Endothelial cell of umbilical vein (primary cell): ENCODE measurements at regions of chr12 and their contacts with region 1.

Region 1: GRCh38 chr12:6323340-6323994 is 13.0 kb downstream of the PLEKHG6 start:
- DNase-seq: peak; percentile 98
- H3K4me3 ChIP-seq: no peak overlapping the region
- H3K27ac ChIP-seq: peak overlapping the region; percentile 80
- H3K4me1 ChIP-seq: peaks cover 36% of the 10 kb centered on the region
- H3K27me3 ChIP-seq: no peaks in the 10 kb centered on the region
- CTCF ChIP-seq: peak; percentile 62 to 67
- POLR2A ChIP-seq: no peak

Region 2: DNA sequence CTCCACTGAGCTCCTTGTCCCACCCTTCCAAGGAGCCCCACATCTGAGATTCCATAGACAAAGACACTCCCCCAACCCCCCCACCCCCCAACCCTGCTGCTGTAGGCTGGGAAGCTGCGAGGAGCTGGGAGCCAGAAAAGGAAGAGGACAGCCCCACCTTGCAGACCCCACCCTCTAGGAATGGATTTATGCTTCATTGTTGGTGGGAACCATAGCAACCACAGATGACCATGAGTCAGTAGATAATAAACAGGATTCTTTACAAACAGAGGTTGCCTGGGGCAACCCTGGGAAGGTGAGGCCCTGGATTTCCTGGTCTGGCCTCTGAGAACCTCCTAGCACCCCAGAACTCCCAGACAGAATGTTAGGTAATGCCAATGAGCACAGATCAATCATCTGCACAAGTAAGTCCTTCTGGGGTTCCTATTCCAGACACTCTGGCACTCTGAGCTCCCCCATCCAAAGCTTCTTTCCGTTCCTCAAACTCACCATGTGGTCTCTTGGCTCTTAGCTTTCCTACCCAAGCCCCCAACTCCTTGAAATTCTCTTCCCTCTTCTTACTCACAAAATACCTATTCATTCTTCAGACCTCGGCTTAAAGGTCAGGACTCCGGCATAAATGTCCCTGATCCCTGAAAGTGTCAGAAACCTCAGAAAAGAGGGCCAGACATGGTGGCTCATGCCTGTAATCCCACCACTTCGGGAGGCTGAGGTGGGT is 28.2 kb before region 1 on chr12:
- CTCF ChIA-PET with region 1: interaction called, 9 read pairs
- POLR2A ChIA-PET with region 1: no interaction called
- dilution Hi-C with region 1: no loop called
- intact Hi-C with region 1: loop called (anchors 1 kb)
- DNase-seq: peak; percentile 90
- H3K4me3 ChIP-seq: no peak overlapping the region
- H3K27ac ChIP-seq: peak overlapping the region; percentile 86
- H3K4me1 ChIP-seq: peaks cover 13% of the 10 kb centered on the region
- H3K27me3 ChIP-seq: no peaks in the 10 kb centered on the region
- CTCF ChIP-seq: no peak
- POLR2A ChIP-seq: no peak

Region 3: GRCh38 chr12:6341417-6342139 is 18.1 kb after region 1 on chr12 and contains the start of gene TNFRSF1A:
- CTCF ChIA-PET with region 1: interaction called, 41 read pairs
- POLR2A ChIA-PET with region 1: interaction called, 7 read pairs
- dilution Hi-C with region 1: no loop called
- intact Hi-C with region 1: loop called (anchors 1 kb)
- DNase-seq: peak; percentile 70
- H3K4me3 ChIP-seq: peak within 1 kb of the TSS; percentile 89 to 98 (median 89)
- H3K27ac ChIP-seq: peak within 1 kb of the TSS; percentile 69
- H3K4me1 ChIP-seq: peaks cover 56% of the 10 kb centered on the region
- H3K27me3 ChIP-seq: no peaks in the 10 kb centered on the region
- CTCF ChIP-seq: no peak
- POLR2A ChIP-seq: peak; percentile 47
- total RNA-seq, gene TNFRSF1A: 84.0 and 98.2 TPM in 2 replicates

Region 4: DNA sequence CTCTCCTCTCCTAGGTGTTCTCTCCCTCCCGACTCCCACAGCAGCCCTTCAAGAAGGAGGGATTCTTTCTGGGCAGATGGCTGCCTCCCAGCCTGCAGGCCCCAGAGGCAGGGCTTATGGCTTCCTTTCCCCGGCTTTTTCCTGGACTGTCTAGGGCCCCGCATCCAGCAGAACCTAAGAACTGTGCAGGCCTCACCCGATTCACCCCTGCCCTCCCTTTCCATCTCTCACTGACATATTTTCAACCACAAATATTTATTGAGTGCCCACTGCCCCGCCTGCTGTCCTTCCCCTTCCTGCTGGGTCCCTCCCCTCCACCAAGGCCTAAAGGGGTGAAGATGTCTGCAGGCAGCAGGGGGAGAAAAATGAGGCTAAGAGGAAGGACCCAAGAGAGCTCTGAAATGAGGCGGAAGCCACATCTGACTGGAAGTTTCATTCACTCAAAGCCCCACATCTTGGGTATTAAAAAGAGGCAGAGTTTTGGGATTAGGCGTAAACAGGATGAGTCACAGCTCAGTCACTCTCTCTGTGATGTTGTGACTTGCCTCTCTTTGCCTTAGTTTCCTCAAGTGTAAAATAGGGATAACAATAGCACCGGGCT is 49.0 kb after region 1 on chr12:
- CTCF ChIA-PET with region 1: interaction called, 12 read pairs
- POLR2A ChIA-PET with region 1: no interaction called
- dilution Hi-C with region 1: no loop called
- intact Hi-C with region 1: loop called (anchors 2 kb)
- DNase-seq: peak; percentile 58
- H3K4me3 ChIP-seq: no peak overlapping the region
- H3K27ac ChIP-seq: peak overlapping the region; percentile 54
- H3K4me1 ChIP-seq: peaks cover 36% of the 10 kb centered on the region
- H3K27me3 ChIP-seq: no peaks in the 10 kb centered on the region
- CTCF ChIP-seq: no peak
- POLR2A ChIP-seq: no peak

Region 5: GRCh38 chr12:6423267-6424007 is 100.0 kb after region 1 on chr12:
- CTCF ChIA-PET with region 1: interaction called, 8 read pairs
- POLR2A ChIA-PET with region 1: no interaction called
- dilution Hi-C with region 1: no loop called
- intact Hi-C with region 1: loop called (anchors 1 kb)
- DNase-seq: peak; percentile 92
- H3K4me3 ChIP-seq: no peak overlapping the region
- H3K27ac ChIP-seq: no peak overlapping the region
- H3K4me1 ChIP-seq: no peaks in the 10 kb centered on the region
- H3K27me3 ChIP-seq: no peaks in the 10 kb centered on the region
- CTCF ChIP-seq: peak; percentile 72 to 84
- POLR2A ChIP-seq: no peak

Region 6: DNA sequence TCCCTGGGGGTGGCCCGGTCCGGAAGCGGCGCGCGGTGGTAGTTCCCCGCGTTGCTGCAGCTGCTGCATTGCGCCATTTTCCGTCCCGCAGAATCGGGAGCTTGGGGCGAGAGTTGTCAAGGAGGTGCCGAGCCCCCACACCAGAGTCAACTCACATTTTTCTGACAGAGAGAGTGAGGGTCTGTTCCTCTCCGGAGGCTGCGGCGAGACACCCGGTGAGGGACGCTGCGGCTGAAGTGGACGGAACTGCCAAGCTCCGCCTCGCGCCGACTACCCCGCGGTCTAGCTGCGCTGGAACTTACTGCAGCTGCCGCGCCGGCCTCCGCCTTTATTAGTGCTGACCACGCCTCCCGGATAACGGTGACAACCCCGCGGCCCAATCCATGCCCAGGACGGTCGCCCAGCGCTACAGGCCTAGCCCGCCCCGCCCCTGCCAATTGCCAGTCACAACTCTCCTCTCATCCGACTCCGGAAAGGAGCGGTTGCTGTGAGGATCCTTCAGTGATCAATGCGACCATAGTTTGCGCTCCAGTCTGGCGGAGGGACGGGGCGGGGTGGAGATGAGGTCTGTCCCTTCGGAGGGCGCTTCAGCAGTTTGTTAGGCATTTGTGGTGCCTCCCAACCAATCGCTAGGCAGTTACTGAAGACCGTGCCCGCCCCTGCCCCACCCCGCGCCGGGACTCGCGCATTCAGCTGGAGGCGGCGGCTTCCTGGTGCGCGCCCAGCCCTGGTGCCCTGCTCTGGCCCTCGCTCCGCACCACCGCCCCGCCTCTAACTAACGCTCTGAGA is 147.1 kb after region 1 on chr12 and contains the start of gene VAMP1:
- CTCF ChIA-PET with region 1: interaction called, 47 read pairs
- POLR2A ChIA-PET with region 1: interaction called, 11 read pairs
- dilution Hi-C with region 1: no loop called
- intact Hi-C with region 1: loop called (anchors 2 kb)
- DNase-seq: peak; percentile 97
- H3K4me3 ChIP-seq: peak within 1 kb of the TSS; percentile 67 to 84 (median 71)
- H3K27ac ChIP-seq: peak within 1 kb of the TSS; percentile 49
- H3K4me1 ChIP-seq: peaks cover 16% of the 10 kb centered on the region
- H3K27me3 ChIP-seq: peaks cover 0 to 5% of the 10 kb centered on the region in 2 experiments
- CTCF ChIP-seq: no peak
- POLR2A ChIP-seq: peak; percentile 99
- total RNA-seq, gene VAMP1: 6.6 and 7.0 TPM in 2 replicates